ENCODE measurements at regions of chr12 and their contacts with region 1.

Region 1: DNA sequence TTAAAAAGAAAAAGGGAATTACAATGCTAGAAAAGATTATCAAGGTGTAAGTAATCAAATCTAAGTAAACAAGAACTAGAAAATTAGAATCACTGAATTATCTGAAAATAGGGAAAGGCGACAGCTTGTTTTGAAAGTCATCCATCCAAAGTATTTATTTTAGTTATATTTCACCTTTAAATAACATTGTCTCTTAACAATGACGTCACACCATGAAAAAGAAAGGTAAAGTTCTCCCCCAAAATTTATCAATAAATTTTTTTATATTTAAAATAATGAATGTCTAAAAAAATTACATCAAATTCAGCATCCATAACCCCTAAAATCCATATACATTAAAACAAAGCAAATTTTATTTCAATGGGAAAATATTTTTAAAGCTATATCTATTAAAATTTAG is 223.2 kb downstream of the RERGL start:
- DNase-seq: no peak
- H3K4me3 ChIP-seq: no peak overlapping the region
- H3K27ac ChIP-seq: no peak overlapping the region
- H3K4me1 ChIP-seq: no peaks in the 10 kb centered on the region
- H3K27me3 ChIP-seq: no peaks in the 10 kb centered on the region
- CTCF ChIP-seq: no peak

Region 2: GRCh38 chr12:17778242-17778641 is 88.6 kb before region 1 on chr12:
- intact Hi-C with region 1: loop called (anchors 5 kb)
- DNase-seq: no peak
- H3K4me3 ChIP-seq: no peak overlapping the region
- H3K27ac ChIP-seq: no peak overlapping the region
- H3K4me1 ChIP-seq: no peaks in the 10 kb centered on the region
- H3K27me3 ChIP-seq: no peaks in the 10 kb centered on the region
- CTCF ChIP-seq: no peak

Measured in ascending aorta (tissue), 2 donors.